ENCODE measurements at regions of chr5 and their contacts with region 1.

Region 1: DNA sequence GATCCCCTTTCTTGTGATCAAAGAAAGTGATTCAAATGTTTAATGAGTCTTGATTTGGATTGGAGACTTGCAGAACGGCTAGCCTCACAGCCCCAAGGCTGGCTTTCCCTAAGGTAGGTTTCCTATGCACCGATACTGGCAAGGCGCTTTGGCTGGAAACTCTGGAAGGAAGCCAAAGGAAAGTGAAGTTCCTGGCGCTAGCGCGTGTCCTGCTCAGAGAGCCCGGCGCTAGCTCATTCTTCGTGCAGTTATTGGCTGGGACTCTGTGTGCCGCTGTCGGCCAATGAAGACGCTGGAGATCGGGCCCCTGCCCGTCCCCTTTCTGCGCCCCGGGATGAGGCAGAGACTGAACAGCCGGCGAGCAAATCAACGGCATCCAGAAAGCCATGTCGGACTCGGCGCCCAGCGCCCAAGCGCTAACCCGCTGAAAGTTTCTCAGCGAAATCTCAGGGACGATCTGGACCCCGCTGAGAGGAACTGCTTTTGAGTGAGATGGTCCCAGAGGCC is at the start of gene PCDHGC3:
- DNase-seq: peak; percentile 85
- H3K4me3 ChIP-seq: peak within 1 kb of the TSS; percentile 79
- H3K27ac ChIP-seq: peak within 1 kb of the TSS; percentile 50
- H3K4me1 ChIP-seq: peaks cover 51% of the 10 kb centered on the region
- CTCF ChIP-seq: peak; percentile 72
- total RNA-seq, gene PCDHGC3: 20.4 and 27.2 TPM in 2 replicates

Region 2: GRCh38 chr5:141359790-141360426 is 115.8 kb before region 1 on chr5 and contains the start of gene PCDHGB2:
- CTCF ChIA-PET with region 1: no interaction called
- POLR2A ChIA-PET with region 1: no interaction called
- intact Hi-C with region 1: loop called (anchors 5 kb)
- DNase-seq: peak; percentile 85
- H3K4me3 ChIP-seq: peak within 1 kb of the TSS; percentile 65
- H3K27ac ChIP-seq: peak within 1 kb of the TSS; percentile 21
- H3K4me1 ChIP-seq: peaks cover 42% of the 10 kb centered on the region
- CTCF ChIP-seq: peak; percentile 94
- total RNA-seq, gene PCDHGB2: 8.3 and 9.3 TPM in 2 replicates

Region 3: DNA sequence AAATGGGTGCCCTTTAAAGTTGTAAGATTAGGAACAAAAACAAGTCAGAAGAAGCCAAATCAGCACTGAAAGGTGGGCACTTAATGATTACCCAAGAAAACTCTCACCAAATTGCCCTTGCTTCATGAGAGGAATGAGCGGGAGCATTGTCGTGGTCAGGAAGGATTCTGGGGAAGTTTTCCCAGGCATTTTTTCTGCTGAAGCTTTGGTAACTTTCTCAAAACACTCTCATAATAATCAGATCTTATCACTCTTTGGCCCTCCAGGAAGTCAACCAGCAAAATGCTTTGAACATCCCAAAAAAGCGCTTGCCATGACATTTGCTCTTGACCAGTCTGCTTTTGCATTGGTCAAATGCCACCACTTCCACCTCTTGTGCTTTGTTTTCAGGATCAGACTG is 10.3 kb before region 1 on chr5:
- CTCF ChIA-PET with region 1: no interaction called
- POLR2A ChIA-PET with region 1: interaction called, 16 read pairs
- intact Hi-C with region 1: no loop called
- DNase-seq: no peak
- H3K4me3 ChIP-seq: no peak overlapping the region
- H3K27ac ChIP-seq: no peak overlapping the region
- H3K4me1 ChIP-seq: no peaks in the 10 kb centered on the region
- CTCF ChIP-seq: no peak

Region 4: GRCh38 chr5:141524604-141525597 is 49.2 kb after region 1 on chr5:
- CTCF ChIA-PET with region 1: interaction called, 4 read pairs
- POLR2A ChIA-PET with region 1: interaction called, 22 read pairs
- intact Hi-C with region 1: loop called (anchors 1 kb)
- DNase-seq: peak; percentile 77
- H3K4me3 ChIP-seq: peak overlapping the region; percentile 42
- H3K27ac ChIP-seq: peak overlapping the region; percentile 98
- H3K4me1 ChIP-seq: peaks cover 84% of the 10 kb centered on the region
- CTCF ChIP-seq: peak; percentile 100

Region 5: DNA sequence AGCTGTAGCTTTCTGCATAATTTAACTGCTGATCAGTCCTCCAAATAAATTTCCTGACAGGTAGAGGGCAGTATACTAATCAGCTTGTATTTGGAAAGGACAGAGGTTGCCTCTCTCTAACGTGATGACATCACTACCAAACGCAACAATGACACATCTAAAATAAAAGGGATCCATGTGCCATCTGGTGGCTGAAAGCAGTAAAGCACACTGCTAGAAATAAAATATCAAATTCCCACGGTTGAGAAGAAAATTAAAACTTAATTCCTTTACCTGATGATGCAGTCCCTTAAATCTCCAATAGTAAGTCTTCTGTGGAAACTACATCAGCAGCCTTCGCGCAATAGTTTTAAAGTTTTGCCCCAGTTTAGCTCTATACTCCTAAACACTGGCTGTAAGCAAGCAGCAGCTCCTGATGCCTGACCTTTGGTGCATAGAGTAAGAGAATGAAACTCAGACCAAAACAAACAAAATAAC is 88.6 kb after region 1 on chr5:
- CTCF ChIA-PET with region 1: interaction called, 23 read pairs
- POLR2A ChIA-PET with region 1: interaction called, 13 read pairs
- intact Hi-C with region 1: no loop called
- DNase-seq: peak; percentile 97
- H3K4me3 ChIP-seq: no peak overlapping the region
- H3K27ac ChIP-seq: peak overlapping the region; percentile 54
- H3K4me1 ChIP-seq: peaks cover 8% of the 10 kb centered on the region
- CTCF ChIP-seq: peak; percentile 100

Measured in OCI-LY7 (cell line).